ENCODE measurements at regions of chr15 and their contacts with region 1.

Region 1: DNA sequence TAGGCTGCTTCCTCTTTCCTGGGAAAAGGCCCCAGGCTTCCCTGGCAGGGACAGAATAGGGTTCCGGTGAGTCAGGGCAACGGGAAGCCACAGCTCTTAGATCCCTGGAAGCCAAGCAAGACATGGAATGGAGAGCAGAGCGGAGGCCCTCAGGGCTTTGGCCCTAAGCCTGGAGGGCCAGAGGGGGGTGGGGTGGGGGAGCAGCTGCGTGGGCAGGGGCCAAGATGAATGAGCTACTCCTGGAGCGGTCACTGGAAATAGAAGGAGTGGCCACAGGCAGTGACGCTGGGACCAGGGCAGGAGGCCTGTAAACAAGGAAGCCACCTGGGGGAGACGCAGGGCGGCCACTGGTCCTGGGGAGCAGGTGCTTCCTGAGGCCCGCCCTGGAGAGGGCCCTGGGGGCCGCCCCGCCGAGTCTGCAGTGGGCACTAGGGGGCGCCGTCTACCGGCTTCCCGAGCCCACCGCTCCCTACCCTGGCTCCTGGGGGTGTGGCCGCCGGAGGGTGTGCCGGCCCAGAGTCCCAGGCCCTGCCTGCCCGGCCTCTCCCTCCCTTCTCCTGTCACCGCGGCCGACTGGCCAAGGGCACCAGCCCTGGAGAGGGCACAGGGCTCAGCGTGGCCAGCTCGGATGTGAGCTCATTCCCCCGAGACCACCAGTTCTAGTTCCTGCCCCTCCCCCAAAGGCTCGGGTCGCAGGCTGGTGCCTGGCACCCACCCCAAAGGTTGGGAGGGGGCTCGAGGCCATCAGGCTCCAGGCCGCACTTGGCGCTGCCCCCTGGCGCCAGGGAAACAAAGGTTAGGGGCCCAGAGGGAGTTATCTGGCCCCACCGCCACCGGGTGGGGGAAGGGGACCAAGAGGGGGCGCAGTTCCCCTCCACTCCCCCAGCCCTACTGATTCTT is 12.1 kb downstream of the VPS18 start:
- DNase-seq: peak; percentile 74
- H3K4me3 ChIP-seq: peak overlapping the region in 1 of 3 experiments; percentile 31
- H3K27ac ChIP-seq: no peak overlapping the region
- H3K4me1 ChIP-seq: peaks cover 38% of the 10 kb centered on the region
- H3K27me3 ChIP-seq: no peaks in the 10 kb centered on the region
- CTCF ChIP-seq: peak; percentile 34 to 68

Region 2: GRCh38 chr15:40928821-40929659 is 22.7 kb after region 1 on chr15 and contains the start of gene DLL4:
- CTCF ChIA-PET with region 1: interaction called, 25 read pairs
- dilution Hi-C with region 1: no loop called
- in situ Hi-C with region 1: no loop called
- intact Hi-C with region 1: loop called (anchors 1 kb)
- DNase-seq: peak; percentile 62
- H3K4me3 ChIP-seq: peak within 1 kb of the TSS; percentile 40 to 44 (median 42)
- H3K27ac ChIP-seq: no peak within 1 kb of the TSS
- H3K4me1 ChIP-seq: peaks cover 35% of the 10 kb centered on the region
- H3K27me3 ChIP-seq: peaks cover 30% of the 10 kb centered on the region
- CTCF ChIP-seq: no peak
- total RNA-seq, gene DLL4: under 0.01 TPM in 1 of 2 donors, not detected in the other

Region 3: DNA sequence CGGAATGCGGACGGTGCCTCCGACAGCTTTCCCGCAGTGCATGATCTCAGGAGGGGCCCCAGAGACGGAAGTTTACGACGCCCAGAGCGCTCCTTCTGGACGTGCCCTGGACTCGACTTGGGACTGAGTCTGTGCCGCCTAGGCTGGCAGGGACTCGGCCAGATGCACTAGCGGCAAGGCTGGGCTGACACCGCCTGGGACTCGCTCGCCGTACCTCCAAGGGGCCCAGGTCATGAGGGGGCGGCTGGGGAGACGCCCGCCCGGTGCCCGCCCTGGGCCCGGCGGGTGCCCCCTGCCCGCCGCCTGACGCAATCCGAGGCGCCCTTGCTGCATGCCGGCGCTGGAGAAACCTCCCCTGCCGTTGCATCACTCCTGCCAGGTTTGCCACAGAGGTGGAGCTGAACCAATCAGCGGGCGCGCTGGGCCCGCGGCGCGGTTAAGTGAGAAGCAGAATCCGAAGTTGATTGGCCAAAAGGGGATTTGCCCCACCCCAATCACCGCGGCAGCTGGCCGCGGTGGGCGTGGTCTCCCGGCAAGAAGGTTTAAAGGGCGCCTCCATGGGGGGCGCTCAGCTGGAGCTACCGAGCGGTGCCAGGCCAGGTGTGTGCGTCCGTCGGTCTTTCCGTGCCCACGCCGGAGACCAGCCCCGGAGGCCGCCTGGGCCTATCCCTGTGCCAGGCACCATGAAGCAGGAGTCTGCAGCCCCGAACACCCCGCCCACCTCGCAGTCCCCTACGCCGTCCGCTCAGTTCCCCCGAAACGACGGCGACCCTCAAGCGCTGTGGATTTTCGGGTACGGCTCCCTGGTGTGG is 46.8 kb after region 1 on chr15 and contains the start of gene CHAC1:
- CTCF ChIA-PET with region 1: no interaction called
- dilution Hi-C with region 1: no loop called
- in situ Hi-C with region 1: no loop called
- intact Hi-C with region 1: loop called (anchors 2 kb)
- DNase-seq: peak; percentile 95
- H3K4me3 ChIP-seq: peak within 1 kb of the TSS; percentile 81 to 93 (median 87)
- H3K27ac ChIP-seq: peak within 1 kb of the TSS; percentile 85
- H3K4me1 ChIP-seq: peaks cover 14% of the 10 kb centered on the region
- H3K27me3 ChIP-seq: no peaks in the 10 kb centered on the region
- CTCF ChIP-seq: peak in 1 of 2 donors; percentile 6
- total RNA-seq, gene CHAC1: 72.4 to 127 TPM

Region 4: GRCh38 chr15:41006479-41006878 is 100.1 kb after region 1 on chr15:
- CTCF ChIA-PET with region 1: no interaction called
- dilution Hi-C with region 1: loop called (anchors 5 kb)
- in situ Hi-C with region 1: no loop called
- intact Hi-C with region 1: no loop called
- DNase-seq: no peak
- H3K4me3 ChIP-seq: no peak overlapping the region
- H3K27ac ChIP-seq: no peak overlapping the region
- H3K4me1 ChIP-seq: no peaks in the 10 kb centered on the region
- H3K27me3 ChIP-seq: no peaks in the 10 kb centered on the region
- CTCF ChIP-seq: no peak

Region 5: GRCh38 chr15:41180206-41180789 is 274.0 kb after region 1 on chr15:
- CTCF ChIA-PET with region 1: no interaction called
- dilution Hi-C with region 1: no loop called
- in situ Hi-C with region 1: loop called in 1 of 2 experiments (anchors 10 kb)
- intact Hi-C with region 1: loop called (anchors 1 kb)
- DNase-seq: no peak
- H3K4me3 ChIP-seq: no peak overlapping the region
- H3K27ac ChIP-seq: no peak overlapping the region
- H3K4me1 ChIP-seq: no peaks in the 10 kb centered on the region
- H3K27me3 ChIP-seq: no peaks in the 10 kb centered on the region
- CTCF ChIP-seq: no peak

Measured in mammary epithelial cell (primary cell).